Dendritic cell treated with granulocyte-macrophage colony-stimulating factor and Interleukin-4, amounts not matched to agents 40 ng/mL and 50 ng/mL, for 4 days (primary cell): ENCODE measurements at regions of chr11 and their contacts with region 1.

Region 1: GRCh38 chr11:107276077-107276476 is 181.5 kb downstream of the CWF19L2 start:
- H3K4me3 Mint-ChIP-seq: no peak overlapping the region
- H3K27ac Mint-ChIP-seq: no peak overlapping the region
- H3K4me1 Mint-ChIP-seq: no peaks in the 10 kb centered on the region
- H3K27me3 Mint-ChIP-seq: no peaks in the 10 kb centered on the region

Region 2: DNA sequence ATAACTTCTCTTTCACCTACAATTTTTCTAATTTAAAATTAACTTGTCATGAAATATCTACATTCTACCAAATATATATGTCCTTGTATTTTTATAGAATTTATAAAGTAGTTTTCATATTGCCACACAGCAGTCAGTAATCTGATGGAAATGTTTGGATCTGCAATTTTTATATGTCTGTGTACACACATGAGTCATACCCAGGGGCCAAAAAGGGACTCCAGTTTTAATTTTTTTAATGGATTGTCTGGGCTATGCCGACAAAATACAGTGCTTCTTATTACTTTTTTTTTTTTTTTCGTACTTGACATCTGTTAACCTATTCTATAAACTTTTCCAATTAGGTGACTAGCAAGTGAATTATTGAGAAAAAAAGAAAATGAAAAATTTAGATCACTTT is 264.1 kb before region 1 on chr11:
- intact Hi-C with region 1: no loop called
- H3K4me3 Mint-ChIP-seq: no peak overlapping the region
- H3K27ac Mint-ChIP-seq: no peak overlapping the region
- H3K4me1 Mint-ChIP-seq: no peaks in the 10 kb centered on the region
- H3K27me3 Mint-ChIP-seq: peaks cover 9% of the 10 kb centered on the region

Region 3: DNA sequence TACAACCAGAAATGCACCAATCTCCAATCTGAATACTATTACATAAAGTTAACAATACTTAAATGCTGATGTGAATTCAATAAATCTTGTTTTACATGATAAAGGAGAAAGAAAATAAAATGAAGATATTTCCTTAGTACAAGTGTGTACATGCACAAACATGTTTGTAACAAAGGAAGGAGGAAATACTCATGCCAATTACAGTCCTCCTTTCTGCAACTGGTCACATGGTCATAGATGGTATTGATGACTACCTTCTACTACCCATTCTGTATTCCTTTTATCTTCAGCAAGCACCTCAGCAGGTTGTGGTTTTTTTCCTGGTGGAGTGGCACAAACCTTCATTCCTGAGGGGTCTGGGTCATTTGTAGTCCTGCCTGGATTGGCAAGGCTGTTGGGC is 43.6 kb before region 1 on chr11:
- intact Hi-C with region 1: no loop called
- H3K4me3 Mint-ChIP-seq: no peak overlapping the region
- H3K27ac Mint-ChIP-seq: no peak overlapping the region
- H3K4me1 Mint-ChIP-seq: no peaks in the 10 kb centered on the region
- H3K27me3 Mint-ChIP-seq: no peaks in the 10 kb centered on the region

Region 4: DNA sequence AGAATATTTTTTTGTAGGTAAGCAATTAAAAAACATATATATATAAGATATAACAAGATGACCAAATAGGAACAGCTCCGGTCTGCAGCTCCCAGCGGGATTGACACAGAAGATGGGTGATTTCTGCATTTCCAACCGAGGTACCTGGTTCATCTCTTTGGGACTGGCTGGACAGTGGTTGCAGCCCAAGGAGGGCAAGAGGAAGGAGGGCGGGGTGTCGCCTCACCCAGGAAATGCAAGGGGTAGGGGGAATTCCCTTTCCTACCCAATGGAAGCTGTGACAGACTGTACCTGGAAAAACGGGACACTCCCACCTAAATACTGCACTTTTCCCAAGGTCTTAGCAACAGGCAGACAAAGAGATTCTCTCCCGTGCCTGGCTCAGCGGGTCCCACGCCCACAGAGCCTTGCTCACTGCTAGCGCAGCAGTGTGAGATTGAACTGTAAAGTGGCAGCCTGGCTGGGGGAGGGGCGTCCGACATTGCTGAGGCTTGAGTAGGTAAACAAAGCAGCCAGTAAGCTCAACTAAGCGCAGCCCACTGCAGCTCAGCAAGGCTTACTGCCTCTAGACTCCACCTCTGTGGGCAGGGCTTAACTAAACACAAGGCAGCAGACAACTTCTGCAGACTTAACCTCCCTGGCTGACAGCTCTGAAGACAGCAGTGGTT is 17.7 kb after region 1 on chr11:
- intact Hi-C with region 1: loop called (anchors 2 kb)
- H3K4me3 Mint-ChIP-seq: no peak overlapping the region
- H3K27ac Mint-ChIP-seq: no peak overlapping the region
- H3K4me1 Mint-ChIP-seq: no peaks in the 10 kb centered on the region
- H3K27me3 Mint-ChIP-seq: no peaks in the 10 kb centered on the region